ENCODE measurements at regions of chr10 and their contacts with region 1.

Region 1: DNA sequence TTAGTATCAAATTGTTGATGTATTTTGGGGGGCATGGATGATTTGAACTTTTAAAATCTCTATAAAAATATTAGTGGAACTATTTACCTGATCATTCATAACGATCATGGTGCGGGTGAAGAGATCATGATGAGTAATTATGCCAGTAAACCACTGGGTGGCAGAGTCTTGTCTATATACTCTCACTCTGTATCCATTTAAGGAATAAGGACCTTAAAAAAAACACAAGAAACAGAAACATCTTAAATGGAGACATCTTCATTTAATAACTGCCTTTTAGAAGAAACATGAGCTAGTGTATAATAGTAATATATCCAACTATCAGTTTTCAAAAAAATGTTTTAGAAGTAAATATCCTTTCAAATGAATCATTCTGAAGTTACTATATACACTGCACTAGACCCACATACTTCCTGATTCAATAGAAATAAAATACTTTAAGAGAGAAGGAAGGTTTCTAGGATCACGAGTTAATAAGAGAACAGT is 84.0 kb downstream of the NRBF2 start:
- DNase-seq: peak in 4 of 5 donors; percentile 60 to 68 (median 64)
- H3K4me3 ChIP-seq: no peak overlapping the region
- H3K4me3 Mint-ChIP-seq: peak overlapping the region in 4 of 8 donors; percentile 3 to 61 (median 24)
- H3K27ac ChIP-seq: no peak overlapping the region
- H3K27ac Mint-ChIP-seq: peak overlapping the region in 6 of 7 donors; percentile 25 to 81 (median 68)
- H3K4me1 ChIP-seq: peaks cover 50% of the 10 kb centered on the region
- H3K4me1 Mint-ChIP-seq: peaks cover 41 to 61% (median 43%) of the 10 kb centered on the region in 4 donors
- H3K27me3 ChIP-seq: no peaks in the 10 kb centered on the region
- H3K27me3 Mint-ChIP-seq: no peaks in the 10 kb centered on the region

Region 2: GRCh38 chr10:63166742-63167258 is 50.4 kb before region 1 on chr10:
- CTCF ChIA-PET with region 1: interaction called, 20 read pairs
- POLR2A ChIA-PET with region 1: no interaction called
- intact Hi-C with region 1: no loop called
- DNase-seq: peak; percentile 50 to 61 (median 56)
- H3K4me3 ChIP-seq: no peak overlapping the region
- H3K4me3 Mint-ChIP-seq: no peak overlapping the region
- H3K27ac ChIP-seq: no peak overlapping the region
- H3K27ac Mint-ChIP-seq: peak overlapping the region in 2 of 7 donors; percentile 36 to 67
- H3K4me1 ChIP-seq: no peaks in the 10 kb centered on the region
- H3K4me1 Mint-ChIP-seq: peaks cover 0 to 2% (median 1%) of the 10 kb centered on the region in 4 donors
- H3K27me3 ChIP-seq: no peaks in the 10 kb centered on the region
- H3K27me3 Mint-ChIP-seq: no peaks in the 10 kb centered on the region

Region 3: GRCh38 chr10:63227207-63227915 is 10.2 kb after region 1 on chr10:
- CTCF ChIA-PET with region 1: interaction called, 19 read pairs
- POLR2A ChIA-PET with region 1: interaction called, 4 read pairs
- intact Hi-C with region 1: no loop called
- DNase-seq: peak in 2 of 5 donors; percentile 22 to 43
- H3K4me3 ChIP-seq: no peak overlapping the region
- H3K4me3 Mint-ChIP-seq: peak overlapping the region in 6 of 8 donors; percentile 16 to 76 (median 60)
- H3K27ac ChIP-seq: no peak overlapping the region
- H3K27ac Mint-ChIP-seq: peak overlapping the region; percentile 38 to 95 (median 89)
- H3K4me1 ChIP-seq: peaks cover 64% of the 10 kb centered on the region
- H3K4me1 Mint-ChIP-seq: peaks cover 42 to 73% (median 48%) of the 10 kb centered on the region in 4 donors
- H3K27me3 ChIP-seq: no peaks in the 10 kb centered on the region
- H3K27me3 Mint-ChIP-seq: no peaks in the 10 kb centered on the region

Region 4: GRCh38 chr10:63355682-63356081 is 138.5 kb after region 1 on chr10:
- CTCF ChIA-PET with region 1: no interaction called
- POLR2A ChIA-PET with region 1: no interaction called
- intact Hi-C with region 1: loop called (anchors 10 kb)
- DNase-seq: no peak
- H3K4me3 ChIP-seq: no peak overlapping the region
- H3K4me3 Mint-ChIP-seq: no peak overlapping the region
- H3K27ac ChIP-seq: no peak overlapping the region
- H3K27ac Mint-ChIP-seq: peak overlapping the region in 1 of 7 donors; percentile 7
- H3K4me1 ChIP-seq: peaks cover 3% of the 10 kb centered on the region
- H3K4me1 Mint-ChIP-seq: peaks cover 6 to 19% (median 12%) of the 10 kb centered on the region in 4 donors
- H3K27me3 ChIP-seq: no peaks in the 10 kb centered on the region
- H3K27me3 Mint-ChIP-seq: no peaks in the 10 kb centered on the region

Region 5: DNA sequence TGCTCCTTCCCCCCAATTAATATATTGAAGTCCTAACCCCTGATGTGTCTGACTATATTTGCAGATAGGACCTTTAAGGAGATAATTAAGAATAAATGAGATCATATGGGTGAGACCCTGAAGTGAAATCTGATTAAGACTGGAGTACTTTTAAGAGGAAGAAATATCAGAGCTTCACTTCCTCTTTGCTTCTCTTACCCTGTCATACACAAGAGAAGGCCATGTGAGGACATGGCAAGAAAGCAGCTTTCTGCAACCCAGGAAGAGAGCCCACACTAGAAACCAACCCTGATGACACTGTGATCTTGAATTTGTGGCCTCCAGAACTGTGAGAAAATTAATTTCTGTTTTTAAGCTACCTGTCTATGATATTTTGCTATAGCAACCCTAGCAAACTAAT is 204.4 kb after region 1 on chr10:
- CTCF ChIA-PET with region 1: interaction called, 3 read pairs
- POLR2A ChIA-PET with region 1: no interaction called
- intact Hi-C with region 1: loop called (anchors 5 kb)
- DNase-seq: peak; percentile 14 to 40 (median 33)
- H3K4me3 ChIP-seq: no peak overlapping the region
- H3K4me3 Mint-ChIP-seq: peak overlapping the region in 6 of 8 donors; percentile 2 to 79 (median 64)
- H3K27ac ChIP-seq: no peak overlapping the region
- H3K27ac Mint-ChIP-seq: peak overlapping the region; percentile 43 to 85 (median 81)
- H3K4me1 ChIP-seq: peaks cover 20% of the 10 kb centered on the region
- H3K4me1 Mint-ChIP-seq: peaks cover 21 to 32% (median 27%) of the 10 kb centered on the region in 4 donors
- H3K27me3 ChIP-seq: no peaks in the 10 kb centered on the region
- H3K27me3 Mint-ChIP-seq: no peaks in the 10 kb centered on the region

Region 6: DNA sequence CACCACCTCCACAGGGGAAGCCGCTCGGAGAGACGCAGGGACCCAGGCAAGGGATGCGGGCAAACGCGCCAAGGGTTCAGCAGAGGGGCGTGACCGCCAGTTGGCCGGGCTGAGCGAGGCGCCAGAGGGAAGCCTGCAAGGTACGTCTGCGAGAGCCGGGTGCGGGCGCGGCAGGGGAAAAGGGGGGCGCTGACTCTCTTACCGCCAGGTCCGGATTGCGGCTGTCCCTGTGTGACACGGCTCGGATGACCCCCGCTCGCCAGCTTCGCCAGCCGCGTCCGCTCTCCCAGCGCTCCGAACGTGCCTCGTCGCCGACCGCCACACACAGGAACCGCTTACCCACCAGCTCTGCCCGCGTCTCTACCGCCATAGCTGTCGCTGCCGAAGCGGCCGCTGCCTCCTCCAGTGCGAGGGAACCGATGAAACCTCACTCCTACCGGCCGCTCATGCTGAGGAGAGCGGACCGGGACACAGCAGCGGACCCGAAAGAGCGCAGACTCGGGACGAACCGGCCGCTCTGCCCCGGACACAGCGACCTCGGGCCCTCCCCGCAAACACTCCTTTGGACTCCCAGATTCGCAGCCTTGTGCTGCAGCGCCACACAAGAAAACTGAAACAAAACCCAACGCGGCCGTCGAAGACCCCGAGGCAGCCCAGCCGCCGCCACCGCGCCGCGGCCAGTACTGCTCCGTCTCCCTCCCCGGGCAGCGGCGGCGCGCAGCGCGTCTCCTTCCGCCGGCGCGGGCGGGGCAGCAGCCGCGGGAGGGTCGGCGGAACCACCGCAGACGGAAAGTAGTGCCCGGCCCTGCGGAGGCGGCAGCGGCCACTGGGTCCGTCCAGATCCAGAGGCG is 248.4 kb after region 1 on chr10 and contains the start of gene JMJD1C:
- CTCF ChIA-PET with region 1: interaction called, 6 read pairs
- POLR2A ChIA-PET with region 1: no interaction called
- intact Hi-C with region 1: loop called (anchors 5 kb)
- DNase-seq: peak; percentile 63 to 70 (median 67)
- H3K4me3 ChIP-seq: peak within 1 kb of the TSS; percentile 58 to 71
- H3K4me3 Mint-ChIP-seq: peak within 1 kb of the TSS; percentile 94 to 98 (median 96)
- H3K27ac ChIP-seq: peak within 1 kb of the TSS; percentile 58
- H3K27ac Mint-ChIP-seq: peak within 1 kb of the TSS; percentile 85 to 94 (median 93)
- H3K4me1 ChIP-seq: peaks cover 16% of the 10 kb centered on the region
- H3K4me1 Mint-ChIP-seq: peaks cover 17 to 31% (median 19%) of the 10 kb centered on the region in 4 donors
- H3K27me3 ChIP-seq: no peaks in the 10 kb centered on the region
- H3K27me3 Mint-ChIP-seq: no peaks in the 10 kb centered on the region
- total RNA-seq, gene JMJD1C: 113 to 115 TPM

Region 7: GRCh38 chr10:63521416-63522276 is 304.5 kb after region 1 on chr10:
- CTCF ChIA-PET with region 1: interaction called, 9 read pairs
- POLR2A ChIA-PET with region 1: interaction called, 12 read pairs
- intact Hi-C with region 1: loop called (anchors 1 kb)
- DNase-seq: peak; percentile 53 to 71 (median 59)
- H3K4me3 ChIP-seq: peak overlapping the region; percentile 79 to 92
- H3K4me3 Mint-ChIP-seq: peak overlapping the region; percentile 80 to 93 (median 86)
- H3K27ac ChIP-seq: peak overlapping the region; percentile 78
- H3K27ac Mint-ChIP-seq: peak overlapping the region; percentile 89 to 96 (median 94)
- H3K4me1 ChIP-seq: peaks cover 63% of the 10 kb centered on the region
- H3K4me1 Mint-ChIP-seq: peaks cover 47 to 79% (median 66%) of the 10 kb centered on the region in 4 donors
- H3K27me3 ChIP-seq: no peaks in the 10 kb centered on the region
- H3K27me3 Mint-ChIP-seq: no peaks in the 10 kb centered on the region

Measured in CD4-positive, alpha-beta memory T cell (primary cell).